PC-9 (cell line): ENCODE measurements at regions of chr9 and their contacts with region 1.

Region 1: DNA sequence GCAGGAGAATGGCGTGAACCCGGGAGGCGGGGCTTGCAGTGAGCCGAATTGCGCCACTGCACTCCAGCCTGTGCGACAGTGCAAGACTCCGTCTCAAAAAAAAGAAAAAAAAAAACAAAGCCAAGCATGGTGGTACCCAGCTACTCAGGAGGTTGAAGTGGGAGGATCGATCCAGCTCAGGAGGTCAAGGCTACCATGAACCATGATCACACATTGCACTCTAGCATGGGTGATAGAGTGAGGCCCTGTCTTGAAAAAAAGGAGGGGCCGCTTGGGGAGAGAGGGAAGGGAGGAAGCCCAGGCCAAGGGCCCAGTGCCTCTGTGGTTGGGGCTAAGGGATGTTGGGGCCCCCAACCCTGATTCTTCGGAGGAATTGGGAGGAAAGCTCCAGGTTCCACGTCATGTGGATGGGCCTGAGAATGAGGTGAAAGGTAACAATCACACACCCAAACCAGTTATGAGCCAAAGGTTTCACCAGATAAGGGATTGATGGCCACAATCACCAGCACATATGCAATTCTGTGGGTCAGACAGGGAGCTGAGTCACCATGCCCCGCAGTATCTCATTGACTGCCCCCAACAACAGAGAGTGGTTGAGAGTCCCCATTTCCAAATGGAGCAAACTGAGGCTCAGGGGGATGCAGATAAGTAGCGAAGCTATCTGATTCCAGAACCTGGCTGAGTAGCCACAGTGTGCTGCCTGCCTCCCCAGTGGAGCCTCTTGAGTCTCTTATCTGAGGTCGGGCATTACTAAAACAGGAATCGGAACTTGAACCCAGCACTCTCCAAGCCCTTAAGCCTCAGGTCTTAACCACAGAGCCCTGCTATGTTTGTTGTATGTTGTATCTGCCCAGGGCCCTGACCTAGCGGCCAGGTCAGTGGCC is 20.5 kb downstream of the SWI5 start:
- DNase-seq: peak in 1 of 2 experiments; percentile 78
- H3K4me3 ChIP-seq: no peak overlapping the region
- H3K27ac ChIP-seq: peak overlapping the region; percentile 97
- H3K4me1 ChIP-seq: peaks cover 56% of the 10 kb centered on the region
- H3K27me3 ChIP-seq: no peaks in the 10 kb centered on the region
- CTCF ChIP-seq: no peak

Region 2: GRCh38 chr9:128310461-128310860 is 13.9 kb after region 1 on chr9:
- CTCF ChIA-PET with region 1: interaction called, 4 read pairs
- POLR2A ChIA-PET with region 1: interaction called, 12 read pairs
- intact Hi-C with region 1: no loop called
- DNase-seq: no peak
- H3K4me3 ChIP-seq: no peak overlapping the region
- H3K27ac ChIP-seq: no peak overlapping the region
- H3K4me1 ChIP-seq: peaks cover 32% of the 10 kb centered on the region
- H3K27me3 ChIP-seq: no peaks in the 10 kb centered on the region
- CTCF ChIP-seq: no peak

Region 3: GRCh38 chr9:128333451-128333869 is 36.9 kb after region 1 on chr9:
- CTCF ChIA-PET with region 1: interaction called, 6 read pairs
- POLR2A ChIA-PET with region 1: interaction called, 28 read pairs
- intact Hi-C with region 1: no loop called
- DNase-seq: no peak
- H3K4me3 ChIP-seq: no peak overlapping the region
- H3K27ac ChIP-seq: no peak overlapping the region
- H3K4me1 ChIP-seq: peaks cover 9% of the 10 kb centered on the region
- H3K27me3 ChIP-seq: no peaks in the 10 kb centered on the region
- CTCF ChIP-seq: no peak

Region 4: DNA sequence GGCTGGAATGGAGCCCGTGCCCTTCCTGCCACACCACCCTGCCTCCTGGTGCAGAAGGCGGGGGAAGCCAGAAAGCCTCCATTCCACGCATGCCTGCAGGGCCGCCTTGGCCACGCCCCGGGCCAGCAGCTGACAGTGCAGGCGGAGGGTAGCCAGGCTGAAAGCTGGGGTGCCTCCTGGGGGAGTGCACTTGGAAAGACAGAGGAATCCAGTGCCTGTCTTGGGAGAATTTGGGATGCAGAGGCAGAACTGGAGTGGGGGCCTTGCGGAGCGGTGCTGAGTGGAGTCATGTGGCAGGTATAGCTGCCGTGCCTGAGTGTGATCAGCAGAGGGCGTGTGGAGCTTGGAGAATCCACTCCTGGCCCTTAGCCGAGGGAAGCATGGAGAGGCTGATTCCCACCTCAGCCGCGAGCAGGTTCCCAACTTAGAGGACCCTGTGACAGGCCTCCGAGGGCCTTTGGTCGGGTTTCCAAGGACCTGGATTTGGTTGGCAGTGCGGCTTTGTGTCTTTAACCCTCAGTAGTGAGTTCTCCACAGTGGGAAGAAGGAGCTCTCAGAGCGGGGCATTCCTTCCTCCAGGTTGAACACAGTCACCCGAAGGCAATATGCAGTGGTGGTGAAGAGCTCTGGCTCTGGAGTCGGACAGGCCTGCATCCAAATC is 65.5 kb after region 1 on chr9:
- CTCF ChIA-PET with region 1: no interaction called
- POLR2A ChIA-PET with region 1: interaction called, 3 read pairs
- intact Hi-C with region 1: loop called (anchors 1 kb)
- DNase-seq: peak in 1 of 2 experiments; percentile 87
- H3K4me3 ChIP-seq: peak overlapping the region; percentile 53; the same call in 1 of the 2 replicates
- H3K27ac ChIP-seq: no peak overlapping the region
- H3K4me1 ChIP-seq: peaks cover 12% of the 10 kb centered on the region
- H3K27me3 ChIP-seq: no peaks in the 10 kb centered on the region
- CTCF ChIP-seq: peak; percentile 88

Region 5: DNA sequence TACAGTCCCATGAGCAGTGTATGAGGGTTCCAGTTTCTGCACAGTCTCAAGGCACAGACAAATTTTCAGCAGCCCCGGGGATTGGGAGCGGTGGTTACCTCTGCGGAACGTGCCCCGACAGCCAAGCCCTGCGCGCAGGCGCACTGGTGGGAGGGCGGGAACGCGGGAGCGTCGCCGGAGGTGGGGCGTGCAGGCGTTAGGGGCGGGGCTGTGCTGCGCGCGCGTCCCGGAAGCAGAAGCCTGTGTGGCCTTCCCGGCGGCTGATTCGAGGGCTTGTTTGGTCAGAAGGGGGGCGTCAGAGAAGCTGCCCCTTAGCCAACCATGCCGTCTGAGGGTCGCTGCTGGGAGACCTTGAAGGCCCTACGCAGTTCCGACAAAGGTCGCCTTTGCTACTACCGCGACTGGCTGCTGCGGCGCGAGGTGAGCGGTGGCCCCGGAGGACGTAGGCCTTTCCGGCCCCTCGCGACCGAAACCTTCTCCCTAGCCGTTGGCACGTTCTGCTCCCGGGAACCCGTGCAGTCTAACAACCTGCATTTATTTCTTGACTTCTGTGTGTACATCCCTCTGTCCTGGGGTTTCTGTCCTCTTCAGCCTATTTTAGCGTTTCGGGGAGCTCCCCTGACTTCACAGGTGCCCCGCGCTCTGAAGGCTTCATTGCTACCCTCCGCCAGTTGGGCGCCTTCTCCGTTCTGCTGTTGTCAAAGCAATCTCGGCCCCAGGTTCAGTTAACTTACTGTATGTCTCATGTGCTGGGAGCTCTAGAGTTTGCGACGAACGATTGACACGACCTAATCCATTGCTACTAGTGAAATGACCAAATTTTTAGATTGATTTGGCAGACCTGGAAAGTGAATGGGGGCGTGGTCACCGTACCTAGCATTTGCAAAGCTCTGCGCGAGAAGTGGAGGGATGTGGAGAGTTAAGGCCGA is 208.2 kb after region 1 on chr9 and contains the start of gene GLE1:
- CTCF ChIA-PET with region 1: no interaction called
- POLR2A ChIA-PET with region 1: no interaction called
- intact Hi-C with region 1: loop called (anchors 2 kb)
- DNase-seq: peak; percentile 79 to 97
- H3K4me3 ChIP-seq: peak within 1 kb of the TSS; percentile 94
- H3K27ac ChIP-seq: peak within 1 kb of the TSS; percentile 43
- H3K4me1 ChIP-seq: peaks cover 17% of the 10 kb centered on the region
- H3K27me3 ChIP-seq: no peaks in the 10 kb centered on the region
- CTCF ChIP-seq: no peak
- total RNA-seq, gene GLE1: 67.2 and 74.2 TPM in 2 replicates

Region 6: GRCh38 chr9:128558431-128559310 is 262.1 kb after region 1 on chr9:
- CTCF ChIA-PET with region 1: no interaction called
- POLR2A ChIA-PET with region 1: no interaction called
- intact Hi-C with region 1: loop called (anchors 5 kb)
- DNase-seq: peak; percentile 78 to 79
- H3K4me3 ChIP-seq: no peak overlapping the region
- H3K27ac ChIP-seq: peak overlapping the region; percentile 61
- H3K4me1 ChIP-seq: peaks cover 57% of the 10 kb centered on the region
- H3K27me3 ChIP-seq: no peaks in the 10 kb centered on the region
- CTCF ChIP-seq: no peak

Region 7: DNA sequence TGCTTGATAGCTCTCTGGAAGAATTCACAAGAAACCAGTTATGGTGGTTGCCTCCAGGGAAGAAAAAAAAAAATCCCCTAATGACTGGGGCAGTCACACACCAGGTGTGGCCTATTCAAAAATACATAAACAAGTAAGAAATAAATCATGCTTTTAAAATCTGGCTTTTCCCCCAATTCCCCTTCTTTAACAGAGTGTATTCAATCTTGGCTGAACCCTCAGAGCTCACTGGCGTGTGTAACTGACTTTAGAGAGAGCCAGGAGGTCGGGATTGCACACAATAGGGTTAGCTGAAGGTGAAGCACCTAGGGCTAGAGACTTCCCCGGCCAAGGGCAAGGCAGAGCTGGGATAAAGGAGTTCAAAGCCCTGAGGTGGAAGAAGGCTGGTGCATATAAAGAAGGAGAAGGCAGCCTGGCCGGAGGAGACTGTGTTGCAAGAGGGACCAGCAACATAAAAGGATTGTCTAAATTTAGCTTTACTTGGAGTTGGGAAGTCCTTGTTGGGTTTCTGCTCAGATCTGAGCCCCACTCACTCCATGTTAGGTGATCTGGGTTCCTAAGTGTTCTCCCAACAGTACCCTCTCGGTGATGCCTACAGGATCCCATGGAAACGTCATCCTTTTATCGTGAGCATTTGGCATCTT is 1726.7 kb after region 1 on chr9:
- CTCF ChIA-PET with region 1: no interaction called
- POLR2A ChIA-PET with region 1: interaction called, 27 read pairs
- intact Hi-C with region 1: no loop called
- DNase-seq: peak; percentile 49 to 94
- H3K4me3 ChIP-seq: no peak overlapping the region
- H3K27ac ChIP-seq: peak overlapping the region; percentile 89
- H3K4me1 ChIP-seq: peaks cover 72% of the 10 kb centered on the region
- H3K27me3 ChIP-seq: no peaks in the 10 kb centered on the region
- CTCF ChIP-seq: no peak